Activated CD4-positive, alpha-beta T cell treated with anti-CD3 and anti-CD28 coated beads, Interleukin-2, amount 10 ng/mL, durations not matched to agents 24 days and 14 days (primary cell): ENCODE measurements at regions of chr10 and their contacts with region 1.

Region 1: DNA sequence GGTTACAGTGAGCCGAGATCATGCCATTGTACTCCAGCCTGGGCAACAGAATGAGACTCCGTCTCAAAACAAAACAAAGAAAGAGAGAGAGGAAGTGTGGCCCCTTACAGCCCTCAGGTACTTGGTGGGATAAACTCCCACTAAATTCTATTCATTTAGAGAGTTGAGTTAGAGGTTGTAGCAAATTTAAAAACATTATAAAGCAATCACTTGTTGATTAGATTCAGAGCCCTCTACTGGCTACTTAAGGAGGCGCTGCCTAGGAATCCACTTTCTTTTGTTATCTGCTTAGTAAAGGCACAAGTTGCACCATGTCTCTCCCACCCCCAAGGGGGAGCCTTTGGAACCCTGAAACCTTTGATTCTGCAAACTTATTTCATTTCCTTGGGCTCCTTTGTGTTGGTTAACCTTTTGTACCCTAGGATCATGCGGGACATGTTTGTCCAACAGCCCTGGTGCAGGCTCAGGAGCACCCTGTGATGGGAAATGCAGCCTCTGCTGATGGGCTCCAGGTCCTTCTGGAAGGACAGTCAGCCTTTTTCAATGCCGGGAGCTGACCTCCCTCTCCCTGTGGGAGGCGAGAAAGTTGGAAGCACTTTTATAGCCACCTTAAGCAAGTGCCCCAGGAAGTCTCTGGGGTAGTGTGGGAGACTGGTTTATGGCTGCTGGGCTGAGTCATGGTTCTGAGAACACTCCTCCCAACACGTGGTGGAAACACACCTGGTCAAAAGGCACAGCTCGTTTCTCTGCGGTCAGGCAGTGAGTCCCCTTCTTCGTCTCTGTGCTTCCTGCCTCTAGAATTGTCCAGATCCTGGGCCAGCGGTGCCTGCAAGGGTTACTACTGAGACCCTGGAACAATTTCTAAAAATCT is 2.3 kb downstream of the HKDC1 start:
- DNase-seq: peak; percentile 94
- H3K4me3 Mint-ChIP-seq: peak overlapping the region; percentile 82
- H3K27ac Mint-ChIP-seq: peak overlapping the region; percentile 95
- H3K4me1 Mint-ChIP-seq: peaks cover 41% of the 10 kb centered on the region
- H3K27me3 Mint-ChIP-seq: no peaks in the 10 kb centered on the region

Region 2: DNA sequence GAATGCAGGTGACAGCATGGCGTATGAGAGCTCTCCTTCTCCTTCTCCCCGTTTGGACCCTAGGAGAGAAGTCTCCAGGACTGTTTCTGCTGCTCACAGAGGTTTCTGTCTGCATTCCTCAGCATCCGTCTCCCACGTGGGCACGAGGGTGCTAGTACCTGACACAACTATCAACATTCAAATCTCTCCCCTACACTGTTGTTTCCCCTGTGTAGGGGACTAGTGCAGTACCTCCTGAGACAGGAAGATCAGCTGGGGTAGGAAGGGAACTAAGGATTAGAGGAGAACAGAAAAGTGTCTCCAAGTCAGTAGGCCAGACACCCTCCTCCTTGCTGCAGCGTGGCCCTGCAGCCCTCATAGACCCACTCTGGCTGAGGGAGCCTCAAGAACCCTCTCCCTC is 366.0 kb before region 1 on chr10:
- intact Hi-C with region 1: no loop called
- DNase-seq: no peak
- H3K4me3 Mint-ChIP-seq: no peak overlapping the region
- H3K27ac Mint-ChIP-seq: no peak overlapping the region
- H3K4me1 Mint-ChIP-seq: no peaks in the 10 kb centered on the region
- H3K27me3 Mint-ChIP-seq: peaks cover 2% of the 10 kb centered on the region

Region 3: DNA sequence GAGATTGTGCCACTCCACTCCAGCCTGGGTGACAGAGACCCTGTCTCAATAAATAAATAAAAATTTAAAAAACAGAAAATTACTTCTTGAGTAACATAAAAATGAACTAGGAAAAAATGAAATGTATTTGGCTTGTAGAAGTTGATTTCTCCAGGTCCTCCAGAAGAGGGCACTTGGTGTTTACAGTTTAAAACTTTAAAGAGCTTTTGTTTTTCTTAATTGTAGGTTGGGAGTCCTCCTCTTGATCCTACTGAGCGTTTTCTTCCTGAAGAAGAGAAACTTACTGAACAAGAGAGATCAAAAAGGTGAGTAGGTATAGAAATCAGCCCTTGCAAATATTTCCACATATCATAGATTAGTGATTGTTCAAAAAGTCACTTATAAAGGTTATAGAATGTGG is 217.6 kb before region 1 on chr10:
- intact Hi-C with region 1: loop called (anchors 1 kb)
- DNase-seq: peak; percentile 66
- H3K4me3 Mint-ChIP-seq: no peak overlapping the region
- H3K27ac Mint-ChIP-seq: no peak overlapping the region
- H3K4me1 Mint-ChIP-seq: peaks cover 2% of the 10 kb centered on the region
- H3K27me3 Mint-ChIP-seq: no peaks in the 10 kb centered on the region

Region 4: GRCh38 chr10:69087590-69088470 is 134.6 kb before region 1 on chr10 and contains the start of gene SRGN:
- intact Hi-C with region 1: loop called (anchors 1 kb)
- DNase-seq: peak; percentile 95
- H3K4me3 Mint-ChIP-seq: peak within 1 kb of the TSS; percentile 88
- H3K27ac Mint-ChIP-seq: peak within 1 kb of the TSS; percentile 93
- H3K4me1 Mint-ChIP-seq: peaks cover 50% of the 10 kb centered on the region
- H3K27me3 Mint-ChIP-seq: no peaks in the 10 kb centered on the region
- total RNA-seq, gene SRGN: 996 and 999 TPM in 2 replicates

Region 5: DNA sequence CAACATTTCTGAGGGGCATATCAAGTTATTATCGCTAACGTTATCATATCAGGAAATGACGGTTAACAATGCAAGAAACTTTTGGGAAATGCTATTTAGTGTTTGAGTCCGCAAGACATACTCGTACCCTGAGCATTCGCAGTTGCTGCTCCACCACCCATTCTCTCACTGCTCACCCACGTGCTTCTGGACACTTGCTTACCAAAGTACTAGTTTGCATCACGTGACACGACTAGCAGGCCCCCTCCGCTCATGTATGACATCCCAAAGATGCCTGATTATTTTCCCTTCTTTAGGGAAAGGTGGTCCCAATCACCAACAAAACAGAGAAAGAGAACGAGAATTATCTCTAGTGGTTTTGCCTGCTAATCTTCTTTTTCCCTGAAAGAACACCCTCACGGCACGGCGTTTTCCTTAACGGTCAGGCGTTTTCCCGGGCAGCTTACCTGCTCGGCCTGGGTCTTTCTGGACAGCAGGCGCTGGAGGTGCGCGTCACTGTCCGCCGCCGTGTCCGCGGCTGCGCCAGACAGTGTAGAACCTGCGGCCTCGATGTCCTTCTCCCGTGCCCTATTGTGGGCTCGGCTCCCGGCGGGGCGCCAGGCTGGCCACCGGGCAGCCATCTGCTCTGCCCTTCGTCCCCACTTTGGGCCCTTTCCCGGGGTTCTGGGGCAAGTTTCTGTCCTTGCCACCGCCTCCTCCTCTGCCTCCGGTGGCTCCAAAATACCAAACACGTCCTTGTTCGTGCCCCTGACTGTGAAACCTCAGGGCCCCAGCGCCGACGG is 42.5 kb before region 1 on chr10 and contains the start of gene SUPV3L1:
- intact Hi-C with region 1: loop called (anchors 1 kb)
- DNase-seq: peak; percentile 96
- H3K4me3 Mint-ChIP-seq: peak within 1 kb of the TSS; percentile 88
- H3K27ac Mint-ChIP-seq: peak within 1 kb of the TSS; percentile 99
- H3K4me1 Mint-ChIP-seq: peaks cover 25% of the 10 kb centered on the region
- H3K27me3 Mint-ChIP-seq: no peaks in the 10 kb centered on the region
- total RNA-seq, gene SUPV3L1: 58.3 and 63.9 TPM in 2 replicates

Region 6: DNA sequence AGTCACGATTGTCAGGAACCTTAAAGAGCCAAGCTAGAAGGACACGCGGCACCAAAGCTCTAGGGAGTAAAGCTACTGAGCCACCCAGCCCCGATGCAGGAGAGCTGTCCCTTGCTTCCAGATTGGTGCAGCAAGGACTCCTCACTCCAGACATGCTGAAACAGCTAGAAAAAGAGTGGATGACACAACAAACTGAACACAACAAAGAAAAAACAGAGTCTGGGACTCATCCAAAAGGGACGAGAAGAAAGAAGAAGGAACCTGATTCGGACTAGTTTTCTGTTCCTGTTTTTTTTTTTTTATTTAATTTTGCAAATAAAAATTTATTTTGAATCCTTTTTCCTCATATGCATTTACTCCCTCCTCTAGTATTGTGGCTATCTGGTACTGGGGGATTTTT is 13.6 kb before region 1 on chr10:
- intact Hi-C with region 1: no loop called
- DNase-seq: no peak
- H3K4me3 Mint-ChIP-seq: no peak overlapping the region
- H3K27ac Mint-ChIP-seq: peak overlapping the region; percentile 41
- H3K4me1 Mint-ChIP-seq: peaks cover 63% of the 10 kb centered on the region
- H3K27me3 Mint-ChIP-seq: no peaks in the 10 kb centered on the region

Region 7: GRCh38 chr10:69262292-69262751 is 39.9 kb after region 1 on chr10:
- intact Hi-C with region 1: loop called (anchors 1 kb)
- DNase-seq: no peak
- H3K4me3 Mint-ChIP-seq: no peak overlapping the region
- H3K27ac Mint-ChIP-seq: peak overlapping the region; percentile 52
- H3K4me1 Mint-ChIP-seq: peaks cover 14% of the 10 kb centered on the region
- H3K27me3 Mint-ChIP-seq: peaks cover 6% of the 10 kb centered on the region

Region 8: DNA sequence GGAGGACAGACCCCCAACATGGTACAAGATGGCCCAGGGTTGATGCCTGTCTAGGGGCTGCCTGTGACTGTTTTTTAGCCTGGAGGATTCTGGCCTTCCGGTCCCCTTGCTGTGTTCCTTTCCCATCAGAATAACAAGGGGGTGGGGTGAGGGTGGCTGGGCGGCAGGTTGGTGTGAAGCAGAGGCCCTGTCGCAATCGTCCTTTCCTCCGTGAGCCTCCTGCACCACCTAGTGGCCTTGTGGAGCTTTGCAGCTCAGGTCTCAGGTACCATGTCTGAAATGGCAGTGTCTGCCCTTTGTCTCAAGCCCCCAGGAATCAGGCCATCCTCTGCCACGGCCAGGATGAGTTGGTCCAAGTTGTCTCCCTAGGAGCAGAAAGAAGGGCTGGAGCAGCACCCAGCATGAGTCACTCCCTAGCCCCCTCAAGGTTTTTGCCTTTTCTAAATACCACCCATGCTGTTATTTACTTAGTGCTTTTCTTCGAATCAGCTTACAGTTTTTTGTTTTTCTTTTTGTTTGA is 170.1 kb after region 1 on chr10:
- intact Hi-C with region 1: loop called (anchors 1 kb)
- DNase-seq: peak; percentile 95
- H3K4me3 Mint-ChIP-seq: no peak overlapping the region
- H3K27ac Mint-ChIP-seq: peak overlapping the region; percentile 67
- H3K4me1 Mint-ChIP-seq: peaks cover 27% of the 10 kb centered on the region
- H3K27me3 Mint-ChIP-seq: no peaks in the 10 kb centered on the region

Region 9: DNA sequence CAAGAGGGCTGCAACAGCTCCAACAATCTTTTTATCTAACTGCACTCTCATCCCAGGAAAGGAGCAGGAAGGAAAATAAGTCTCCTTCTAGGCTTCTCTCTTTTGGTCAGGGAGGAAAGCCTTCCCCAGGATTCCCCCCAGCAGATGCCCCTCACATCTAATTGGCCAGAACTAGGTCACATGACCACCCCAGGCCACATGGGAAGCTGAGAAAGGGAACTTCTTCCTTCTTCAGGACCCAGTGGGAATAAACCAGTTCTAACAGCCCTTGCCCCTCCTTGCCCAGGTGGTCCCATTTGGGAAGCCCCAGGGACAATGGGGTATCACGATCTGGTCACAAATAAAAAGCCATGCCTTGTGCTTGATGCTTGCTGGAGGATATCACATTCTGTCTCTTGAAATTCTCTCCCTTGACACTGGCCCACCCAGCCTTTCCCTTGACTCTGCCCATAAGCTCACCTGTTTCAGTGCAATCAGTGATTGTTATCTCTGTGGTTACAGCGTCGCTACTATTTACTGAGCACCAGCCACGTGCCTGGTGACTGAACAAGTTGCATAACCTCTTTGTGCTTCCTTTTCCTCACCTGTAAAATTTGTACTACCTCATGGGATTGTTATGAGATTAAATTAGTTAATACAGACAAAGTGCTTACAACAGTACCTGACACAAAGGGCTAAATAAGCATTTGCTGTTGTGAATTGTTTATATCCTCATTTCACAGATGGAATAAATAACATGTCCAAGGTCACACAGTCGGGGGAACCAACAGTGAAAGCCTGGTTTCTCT is 203.3 kb after region 1 on chr10:
- intact Hi-C with region 1: no loop called
- DNase-seq: no peak
- H3K4me3 Mint-ChIP-seq: no peak overlapping the region
- H3K27ac Mint-ChIP-seq: peak overlapping the region; percentile 29
- H3K4me1 Mint-ChIP-seq: peaks cover 31% of the 10 kb centered on the region
- H3K27me3 Mint-ChIP-seq: no peaks in the 10 kb centered on the region